IMR-90 (cell line): ENCODE measurements at regions of chr6 and their contacts with region 1.

Region 1: GRCh38 chr6:149342525-149342924 is 25.0 kb downstream of the TAB2 start:
- DNase-seq: no peak
- ATAC-seq: no peak
- H3K4me3 ChIP-seq: no peak overlapping the region
- H3K27ac ChIP-seq: no peak overlapping the region
- H3K4me1 ChIP-seq: no peaks in the 10 kb centered on the region
- H3K27me3 ChIP-seq: no peaks in the 10 kb centered on the region
- CTCF ChIP-seq: no peak
- POLR2A ChIP-seq: no peak
- RAD21 ChIP-seq: no peak

Region 2: GRCh38 chr6:149397384-149397783 is 54.9 kb after region 1 on chr6:
- CTCF ChIA-PET with region 1: no interaction called
- POLR2A ChIA-PET with region 1: no interaction called
- dilution Hi-C with region 1: no loop called
- in situ Hi-C with region 1: no loop called
- intact Hi-C with region 1: loop called (anchors 5 kb)
- DNase-seq: no peak
- ATAC-seq: no peak
- H3K4me3 ChIP-seq: no peak overlapping the region
- H3K27ac ChIP-seq: no peak overlapping the region
- H3K4me1 ChIP-seq: peaks cover 1% of the 10 kb centered on the region
- H3K27me3 ChIP-seq: no peaks in the 10 kb centered on the region
- CTCF ChIP-seq: no peak
- POLR2A ChIP-seq: no peak
- RAD21 ChIP-seq: no peak